ENCODE measurements at regions of chr14 and their contacts with region 1.

Region 1: DNA sequence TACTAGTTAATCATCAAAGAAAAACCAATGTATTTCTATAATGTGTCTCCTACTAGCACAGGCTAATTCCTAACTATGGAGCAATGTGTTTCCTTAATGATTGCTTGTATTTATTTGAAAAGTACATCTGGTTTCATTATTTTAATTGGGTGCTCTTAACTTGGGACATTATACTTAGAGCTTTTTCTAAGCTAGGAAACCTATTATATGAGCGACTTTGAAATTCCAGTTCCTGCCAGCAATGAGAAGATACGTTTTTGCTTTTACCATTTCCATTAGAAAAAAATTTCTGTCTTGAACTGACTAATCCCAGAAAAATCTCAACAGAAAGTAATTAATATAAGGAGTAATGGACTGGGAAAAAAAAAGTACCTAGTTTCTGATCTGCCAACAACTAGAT is 1765.3 kb upstream of the FLRT2 start:
- H3K4me3 Mint-ChIP-seq: no peak overlapping the region
- H3K27ac Mint-ChIP-seq: no peak overlapping the region
- H3K4me1 Mint-ChIP-seq: no peaks in the 10 kb centered on the region
- H3K27me3 Mint-ChIP-seq: no peaks in the 10 kb centered on the region

Region 2: GRCh38 chr14:82915381-82915780 is 849.3 kb before region 1 on chr14:
- intact Hi-C with region 1: loop called (anchors 10 kb)
- H3K4me3 Mint-ChIP-seq: no peak overlapping the region
- H3K27ac Mint-ChIP-seq: no peak overlapping the region
- H3K4me1 Mint-ChIP-seq: no peaks in the 10 kb centered on the region
- H3K27me3 Mint-ChIP-seq: no peaks in the 10 kb centered on the region

Region 3: GRCh38 chr14:83744891-83745290 is 19.8 kb before region 1 on chr14:
- intact Hi-C with region 1: no loop called
- H3K4me3 Mint-ChIP-seq: no peak overlapping the region
- H3K27ac Mint-ChIP-seq: no peak overlapping the region
- H3K4me1 Mint-ChIP-seq: no peaks in the 10 kb centered on the region
- H3K27me3 Mint-ChIP-seq: no peaks in the 10 kb centered on the region